ENCODE measurements at regions of chr5 and their contacts with region 1.

Region 1: DNA sequence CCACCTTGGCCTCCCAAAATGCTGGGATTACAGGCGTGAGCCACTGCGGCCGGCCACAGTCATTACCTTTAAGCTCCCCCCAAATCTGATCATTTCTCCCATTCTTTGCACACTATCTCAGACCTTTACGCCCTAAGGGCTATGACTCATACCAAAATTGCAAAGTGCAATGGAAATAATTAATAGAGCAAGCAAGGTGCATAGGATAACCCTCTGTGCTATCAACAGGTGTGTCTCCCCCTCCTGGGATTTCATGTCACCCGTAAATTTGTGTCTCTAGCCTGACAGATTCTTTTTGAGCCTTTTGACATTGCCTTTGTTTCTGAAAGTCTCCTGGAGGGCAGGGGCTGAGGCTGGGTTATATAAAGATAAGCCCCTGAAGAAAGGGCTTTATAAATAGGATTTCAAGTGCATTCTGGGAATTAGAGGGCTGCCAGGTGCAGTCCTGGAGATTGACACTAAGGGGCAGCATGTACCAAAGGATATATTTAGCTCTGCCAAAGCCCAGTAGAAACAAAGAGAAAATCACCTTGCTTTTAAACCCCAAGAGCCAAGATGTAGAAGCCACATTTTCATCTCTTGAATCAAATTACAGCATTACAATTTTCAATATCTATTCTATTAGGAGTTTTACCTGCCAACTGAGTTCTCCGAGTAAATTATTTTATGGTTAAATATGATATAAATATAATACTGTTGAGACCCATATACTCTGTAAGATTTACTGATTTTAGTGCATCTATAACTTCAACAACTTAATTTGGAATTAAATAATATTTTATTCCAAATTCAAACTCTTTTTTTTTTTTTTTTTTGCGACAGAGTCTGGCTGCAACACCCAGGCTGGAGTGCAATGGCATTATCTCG is 18.2 kb downstream of the S100Z start:
- DNase-seq: peak in 1 of 2 donors; percentile 75
- ATAC-seq: peak; percentile 80 to 88 (median 82)
- H3K4me3 ChIP-seq: no peak overlapping the region
- H3K4me3 Mint-ChIP-seq: no peak overlapping the region
- H3K27ac ChIP-seq: no peak overlapping the region
- H3K27ac Mint-ChIP-seq: no peak overlapping the region
- H3K4me1 ChIP-seq: no peaks in the 10 kb centered on the region
- H3K4me1 Mint-ChIP-seq: no peaks in the 10 kb centered on the region
- H3K27me3 ChIP-seq: no peaks in the 10 kb centered on the region
- H3K27me3 Mint-ChIP-seq: no peaks in the 10 kb centered on the region
- CTCF ChIP-seq: peak; percentile 62

Region 2: DNA sequence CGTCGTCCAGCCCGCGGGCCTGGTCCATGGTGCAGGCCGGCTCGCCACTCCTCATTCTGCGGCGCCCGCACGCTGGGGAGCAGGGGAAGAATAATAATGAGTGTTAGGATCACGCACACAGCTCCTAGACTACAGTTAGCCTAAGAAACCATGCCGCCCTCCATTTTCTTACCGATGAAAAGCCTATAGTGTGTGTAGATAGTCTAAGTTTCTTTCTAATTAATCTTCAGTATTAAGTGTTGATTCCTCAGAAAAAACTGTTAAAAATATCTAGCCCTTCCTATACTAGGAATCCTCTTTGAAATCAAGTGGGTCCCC is 209.7 kb after region 1 on chr5:
- intact Hi-C with region 1: loop called (anchors 1 kb)
- DNase-seq: no peak
- ATAC-seq: no peak
- H3K4me3 ChIP-seq: no peak overlapping the region
- H3K4me3 Mint-ChIP-seq: peak overlapping the region; percentile 84
- H3K27ac ChIP-seq: no peak overlapping the region
- H3K27ac Mint-ChIP-seq: no peak overlapping the region
- H3K4me1 ChIP-seq: peaks cover 4% of the 10 kb centered on the region
- H3K4me1 Mint-ChIP-seq: peaks cover 0 to 5% of the 10 kb centered on the region in 2 donors
- H3K27me3 ChIP-seq: no peaks in the 10 kb centered on the region
- H3K27me3 Mint-ChIP-seq: no peaks in the 10 kb centered on the region
- CTCF ChIP-seq: no peak

Region 3: DNA sequence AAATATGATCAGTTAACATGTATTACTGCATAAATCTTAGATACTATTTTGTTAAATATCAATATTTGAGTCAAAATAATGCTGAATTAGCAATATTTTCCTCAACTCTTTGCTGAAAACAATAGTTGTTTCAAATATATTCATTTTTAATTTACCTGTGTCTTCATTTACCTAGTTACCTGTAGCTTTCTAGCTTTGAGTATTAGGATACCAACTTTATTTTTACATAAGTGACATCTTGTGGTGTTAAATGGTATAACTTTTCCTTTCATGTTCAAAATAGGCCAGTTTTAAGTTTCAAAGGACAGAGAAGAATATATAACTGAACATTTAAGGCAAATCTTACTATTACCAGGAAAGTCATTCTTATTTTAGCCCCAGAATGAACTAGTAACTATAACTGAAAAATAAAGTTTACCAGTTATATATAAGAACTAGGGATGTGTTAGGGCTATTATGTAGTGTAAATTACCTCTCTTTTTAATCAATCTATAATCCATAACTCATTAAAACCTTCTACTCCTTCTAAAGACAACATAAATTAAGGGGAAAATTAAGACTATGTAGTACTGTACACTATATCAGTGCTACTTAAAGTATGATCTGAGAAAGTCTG is 1401.1 kb after region 1 on chr5:
- intact Hi-C with region 1: loop called (anchors 10 kb)
- DNase-seq: peak in 1 of 2 donors; percentile 41
- ATAC-seq: peak; percentile 46 to 62 (median 48)
- H3K4me3 ChIP-seq: no peak overlapping the region
- H3K4me3 Mint-ChIP-seq: no peak overlapping the region
- H3K27ac ChIP-seq: no peak overlapping the region
- H3K27ac Mint-ChIP-seq: no peak overlapping the region
- H3K4me1 ChIP-seq: no peaks in the 10 kb centered on the region
- H3K4me1 Mint-ChIP-seq: peaks cover 27 to 44% of the 10 kb centered on the region in 2 donors
- H3K27me3 ChIP-seq: no peaks in the 10 kb centered on the region
- H3K27me3 Mint-ChIP-seq: no peaks in the 10 kb centered on the region
- CTCF ChIP-seq: peak; percentile 68